Mucosa of descending colon (tissue), 3 donors: ENCODE measurements at regions of chr1 and their contacts with region 1.

Region 1: DNA sequence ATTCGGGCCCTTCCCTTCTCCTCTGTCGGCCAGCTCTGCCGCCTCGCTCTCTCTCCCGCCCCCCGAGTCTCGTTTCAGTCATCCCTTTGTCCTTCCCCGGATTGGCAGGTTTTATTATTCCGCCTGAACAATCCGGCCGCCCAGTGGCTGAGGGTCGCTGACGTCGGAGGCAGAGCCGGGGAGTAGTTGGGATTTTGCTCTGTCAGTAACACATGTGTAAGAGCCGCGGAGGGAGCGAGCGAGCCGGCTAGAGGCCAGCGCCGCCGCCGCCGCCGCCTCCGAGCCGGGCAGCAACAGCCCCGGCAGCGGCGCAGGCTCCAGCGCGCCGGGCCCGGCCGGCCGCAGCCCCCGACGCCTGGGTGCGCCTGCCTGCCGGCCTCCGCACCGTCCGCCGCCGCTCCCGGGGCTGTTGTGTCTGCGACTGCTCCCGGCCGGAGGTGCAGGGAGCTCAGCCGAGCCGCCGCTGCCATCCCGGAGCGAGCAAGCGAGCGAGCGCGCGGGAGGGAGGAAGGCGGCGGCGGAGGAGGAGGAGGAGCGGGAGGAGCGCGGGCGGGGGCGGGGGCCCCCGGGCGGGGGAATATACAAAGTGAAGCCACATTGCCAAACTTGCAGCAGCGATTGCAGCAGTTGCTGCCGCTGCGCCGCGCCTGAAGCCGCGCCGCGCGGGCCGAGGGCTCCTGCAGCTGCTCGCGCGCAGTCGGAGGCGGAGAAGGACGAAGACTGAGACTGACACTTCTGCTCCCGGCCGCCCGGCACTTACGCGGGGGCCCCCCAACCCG is at the start of gene LMO4:
- DNase-seq: peak; percentile 96
- ATAC-seq: peak; percentile 83
- H3K4me3 ChIP-seq: peak within 1 kb of the TSS; percentile 74
- H3K4me1 ChIP-seq: peaks cover 19% of the 10 kb centered on the region
- CTCF ChIP-seq: no peak
- total RNA-seq, gene LMO4: 19.0 to 51.2 (median 31.6) TPM

Region 2: GRCh38 chr1:87688136-87688535 is 359.7 kb after region 1 on chr1:
- intact Hi-C with region 1: no loop called
- DNase-seq: no peak
- ATAC-seq: peak; percentile 39
- H3K4me3 ChIP-seq: no peak overlapping the region
- H3K4me1 ChIP-seq: peaks cover 4% of the 10 kb centered on the region
- CTCF ChIP-seq: no peak

Region 3: DNA sequence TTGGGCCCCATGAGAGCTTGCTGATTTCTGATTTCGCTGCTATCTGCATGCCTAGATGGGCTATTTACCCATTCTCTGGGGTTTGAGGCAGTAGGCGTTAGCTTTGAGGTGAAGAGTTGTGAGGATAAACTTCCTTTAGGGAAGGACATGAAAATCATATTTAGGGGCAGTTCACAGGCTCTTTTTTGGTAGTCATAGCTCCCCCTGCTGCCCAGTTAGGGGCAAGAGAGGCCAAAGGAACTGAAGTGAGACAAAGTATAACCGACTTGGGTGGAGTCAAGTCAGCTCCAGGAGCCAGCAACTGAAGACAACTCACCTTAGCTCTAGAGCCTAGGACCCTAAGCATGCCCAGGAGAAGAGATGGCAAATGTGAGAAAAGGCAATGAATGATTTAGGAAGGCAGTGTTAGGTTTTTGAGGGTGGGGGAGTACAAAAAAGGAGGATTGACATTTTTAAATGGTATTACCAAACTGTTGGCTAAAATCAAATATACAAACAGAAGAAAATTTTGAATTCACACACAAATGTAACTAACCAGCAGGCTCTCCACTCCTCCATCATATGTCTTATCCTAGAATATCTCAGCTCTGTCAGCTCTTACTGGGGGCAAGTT is 625.4 kb after region 1 on chr1:
- intact Hi-C with region 1: loop called (anchors 5 to 10 kb)
- DNase-seq: peak in 2 of 3 donors; percentile 70 to 84
- ATAC-seq: peak; percentile 89
- H3K4me3 ChIP-seq: no peak overlapping the region
- H3K4me1 ChIP-seq: no peaks in the 10 kb centered on the region
- CTCF ChIP-seq: peak; percentile 50